ENCODE measurements at regions of chr3 and their contacts with region 1.

Region 1: GRCh38 chr3:184543843-184544512 is 17.6 kb upstream of the EPHB3 start:
- DNase-seq: peak; percentile 39 to 87 (median 62)
- ATAC-seq: peak; percentile 75 to 79 (median 77)
- H3K4me3 ChIP-seq: no peak overlapping the region
- H3K4me3 Mint-ChIP-seq: peak overlapping the region in 2 of 3 donors; percentile 29 to 41
- H3K27ac ChIP-seq: no peak overlapping the region
- H3K27ac Mint-ChIP-seq: no peak overlapping the region
- H3K4me1 ChIP-seq: peaks cover 0 to 11% of the 10 kb centered on the region in 2 experiments
- H3K4me1 Mint-ChIP-seq: peaks cover 6 to 20% (median 18%) of the 10 kb centered on the region in 3 donors
- H3K27me3 ChIP-seq: peaks cover 0 to 42% of the 10 kb centered on the region in 2 experiments
- H3K27me3 Mint-ChIP-seq: peaks cover 13 to 29% of the 10 kb centered on the region in 2 donors

Region 2: GRCh38 chr3:184371570-184372018 is 172.4 kb before region 1 on chr3:
- CTCF ChIA-PET with region 1: interaction called, 16 to 36 read pairs
- POLR2A ChIA-PET with region 1: no interaction called
- DNase-seq: peak in 33 of 35 experiments; percentile 25 to 74 (median 51)
- ATAC-seq: peak; percentile 90 to 99 (median 95)
- H3K4me3 ChIP-seq: no peak overlapping the region
- H3K4me3 Mint-ChIP-seq: no peak overlapping the region
- H3K27ac ChIP-seq: no peak overlapping the region
- H3K27ac Mint-ChIP-seq: peak overlapping the region in 1 of 2 donors; percentile 11
- H3K4me1 ChIP-seq: peaks cover 0 to 5% of the 10 kb centered on the region in 2 experiments
- H3K4me1 Mint-ChIP-seq: peaks cover 4 to 14% (median 11%) of the 10 kb centered on the region in 3 donors
- H3K27me3 ChIP-seq: peaks cover 0 to 9% of the 10 kb centered on the region in 2 experiments
- H3K27me3 Mint-ChIP-seq: peaks cover 10 to 12% of the 10 kb centered on the region in 2 donors

Region 3: DNA sequence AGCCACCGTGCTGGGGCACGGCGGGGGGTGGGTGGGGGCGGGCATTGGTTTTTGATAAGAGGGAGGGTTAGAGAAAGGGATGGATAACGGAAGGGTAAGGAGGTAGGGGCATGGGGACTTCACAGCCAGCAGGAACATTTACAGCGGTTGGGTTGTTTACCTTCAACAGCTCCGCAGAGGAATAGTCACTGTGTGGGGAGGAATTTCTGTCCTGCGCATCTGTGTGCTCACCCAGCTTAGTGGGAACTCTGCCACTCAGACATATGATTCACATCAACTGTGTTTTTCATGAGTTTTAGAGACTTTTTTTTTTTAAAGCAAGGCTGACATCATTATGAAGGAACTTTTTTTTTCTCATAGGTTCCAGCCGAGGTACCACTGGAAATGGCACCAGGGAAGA is 144.6 kb before region 1 on chr3:
- CTCF ChIA-PET with region 1: interaction called in 1 of 2 experiments, 10 read pairs
- POLR2A ChIA-PET with region 1: no interaction called
- DNase-seq: no peak
- ATAC-seq: no peak
- H3K4me3 ChIP-seq: no peak overlapping the region
- H3K4me3 Mint-ChIP-seq: no peak overlapping the region
- H3K27ac ChIP-seq: no peak overlapping the region
- H3K27ac Mint-ChIP-seq: no peak overlapping the region
- H3K4me1 ChIP-seq: no peaks in the 10 kb centered on the region
- H3K4me1 Mint-ChIP-seq: no peaks in the 10 kb centered on the region
- H3K27me3 ChIP-seq: peaks cover 2 to 17% of the 10 kb centered on the region in 2 experiments
- H3K27me3 Mint-ChIP-seq: peaks cover 17 to 30% of the 10 kb centered on the region in 2 donors

Measured in T-cell (primary cell).